AG04449 (cell line): ENCODE measurements at regions of chr4 and their contacts with region 1.

Region 1: GRCh38 chr4:138680989-138681604 is 334.5 kb upstream of the NOCT start:
- DNase-seq: peak; percentile 26
- H3K4me3 ChIP-seq: no peak overlapping the region
- CTCF ChIP-seq: peak; percentile 72

Region 2: GRCh38 chr4:137819964-137820383 is 861.1 kb before region 1 on chr4:
- CTCF ChIA-PET with region 1: interaction called, 43 read pairs
- POLR2A ChIA-PET with region 1: no interaction called
- DNase-seq: no peak
- H3K4me3 ChIP-seq: no peak overlapping the region
- CTCF ChIP-seq: peak; percentile 50

Region 3: GRCh38 chr4:138090150-138090917 is 590.8 kb before region 1 on chr4:
- CTCF ChIA-PET with region 1: interaction called, 21 read pairs
- POLR2A ChIA-PET with region 1: no interaction called
- DNase-seq: no peak
- H3K4me3 ChIP-seq: peak overlapping the region; percentile 38
- CTCF ChIP-seq: peak; percentile 45

Region 4: GRCh38 chr4:138669479-138670315 is 11.4 kb before region 1 on chr4:
- CTCF ChIA-PET with region 1: interaction called, 23 read pairs
- POLR2A ChIA-PET with region 1: no interaction called
- DNase-seq: peak; percentile 28
- H3K4me3 ChIP-seq: no peak overlapping the region
- CTCF ChIP-seq: no peak

Region 5: GRCh38 chr4:138870737-138871554 is 189.8 kb after region 1 on chr4:
- CTCF ChIA-PET with region 1: interaction called, 17 read pairs
- POLR2A ChIA-PET with region 1: no interaction called
- DNase-seq: peak; percentile 16
- H3K4me3 ChIP-seq: no peak overlapping the region
- CTCF ChIP-seq: peak; percentile 66

Region 6: DNA sequence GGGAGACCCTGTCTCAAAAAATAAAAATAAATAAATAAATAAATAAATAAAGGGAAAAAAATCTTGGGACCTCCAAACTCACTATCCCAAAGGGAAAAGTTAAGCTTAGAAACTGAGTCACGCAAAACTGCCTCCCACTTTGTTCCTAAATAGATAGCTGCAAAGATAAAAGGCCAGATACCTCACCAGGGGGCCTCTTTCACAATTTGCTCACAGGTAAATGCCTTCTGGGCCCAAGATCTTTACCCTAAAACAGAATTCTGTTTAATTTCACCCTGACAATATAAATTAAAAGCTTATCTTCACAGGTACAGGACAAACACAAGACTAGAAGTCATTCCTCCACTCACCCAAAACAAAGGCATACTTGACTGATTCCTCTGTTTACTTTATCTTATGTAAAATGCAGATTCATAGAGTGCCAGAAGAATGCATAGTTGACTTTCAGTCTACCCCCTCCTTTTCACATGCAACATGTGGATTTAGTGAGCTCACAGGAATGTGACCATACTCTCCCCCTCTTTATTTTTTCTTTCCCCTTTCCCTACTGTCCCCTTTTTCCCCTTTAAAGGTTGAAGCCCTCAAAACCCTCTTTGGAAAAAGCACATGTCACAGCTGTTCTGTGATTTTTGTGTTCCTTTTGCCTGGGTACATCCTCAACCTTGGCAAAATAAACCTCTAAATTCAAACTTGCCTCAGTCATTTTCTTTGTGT is 472.5 kb after region 1 on chr4:
- CTCF ChIA-PET with region 1: no interaction called
- POLR2A ChIA-PET with region 1: no interaction called
- DNase-seq: no peak
- H3K4me3 ChIP-seq: no peak overlapping the region
- CTCF ChIP-seq: no peak